ENCODE measurements at regions of chr3 and their contacts with region 1.

Region 1: GRCh38 chr3:143644370-143645089 is 203.7 kb downstream of the SLC9A9 start:
- DNase-seq: no peak

Region 2: DNA sequence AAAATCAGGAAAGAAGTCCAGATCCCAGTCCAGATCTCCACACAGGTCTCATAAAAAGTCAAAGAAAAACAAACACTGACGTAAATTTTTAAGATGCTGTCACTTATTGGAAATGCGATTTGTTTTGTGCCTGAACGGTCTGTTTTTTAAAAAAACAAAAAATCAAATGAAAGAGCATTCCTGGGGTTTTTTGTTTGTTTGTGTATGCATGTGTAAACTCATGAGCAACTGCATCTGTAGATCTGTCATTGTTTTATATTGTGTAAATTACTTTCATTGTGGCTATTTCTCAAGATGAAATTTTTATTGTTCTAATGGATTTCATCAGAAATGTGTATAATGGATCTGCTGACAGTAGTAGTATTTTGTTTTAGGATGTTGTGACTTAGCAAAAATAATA is 588.2 kb before region 1 on chr3:
- intact Hi-C with region 1: loop called (anchors 10 kb)
- DNase-seq: no peak

Region 3: GRCh38 chr3:143135150-143135549 is 509.4 kb before region 1 on chr3:
- intact Hi-C with region 1: loop called (anchors 10 kb)
- DNase-seq: no peak

Region 4: DNA sequence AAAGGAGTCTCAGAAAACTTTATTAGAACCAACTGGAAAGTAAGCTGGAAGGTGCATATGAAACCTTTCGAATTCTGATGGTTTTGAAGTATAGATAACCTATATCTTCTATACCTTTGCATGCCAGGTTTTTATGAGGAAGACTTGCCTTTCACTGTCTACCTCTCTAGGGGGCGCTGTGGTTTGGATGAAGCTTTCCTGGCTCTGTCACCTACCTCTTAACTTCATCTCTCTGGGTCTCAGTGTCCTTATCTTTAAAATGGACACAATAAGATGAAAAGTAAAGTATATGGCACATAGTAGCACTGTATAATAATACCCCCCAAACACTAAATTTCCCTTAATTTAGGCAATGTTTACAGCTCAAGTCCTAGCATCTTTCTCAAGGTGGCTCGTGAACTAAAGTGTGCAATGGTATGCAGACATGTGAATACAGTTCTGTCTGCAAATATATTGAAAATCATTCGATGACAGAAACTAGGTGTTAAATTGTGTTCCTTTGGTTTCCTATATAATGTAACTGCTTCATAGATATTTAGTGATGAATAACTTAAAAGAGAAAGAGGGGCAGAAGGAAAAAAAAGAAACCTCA is 210.6 kb before region 1 on chr3:
- intact Hi-C with region 1: loop called (anchors 10 kb)
- DNase-seq: no peak

Region 5: GRCh38 chr3:143565951-143566350 is 78.6 kb before region 1 on chr3:
- intact Hi-C with region 1: no loop called
- DNase-seq: no peak